Naive thymus-derived CD4-positive, alpha-beta T cell (primary cell): ENCODE measurements at regions of chr6 and their contacts with region 1.

Region 1: DNA sequence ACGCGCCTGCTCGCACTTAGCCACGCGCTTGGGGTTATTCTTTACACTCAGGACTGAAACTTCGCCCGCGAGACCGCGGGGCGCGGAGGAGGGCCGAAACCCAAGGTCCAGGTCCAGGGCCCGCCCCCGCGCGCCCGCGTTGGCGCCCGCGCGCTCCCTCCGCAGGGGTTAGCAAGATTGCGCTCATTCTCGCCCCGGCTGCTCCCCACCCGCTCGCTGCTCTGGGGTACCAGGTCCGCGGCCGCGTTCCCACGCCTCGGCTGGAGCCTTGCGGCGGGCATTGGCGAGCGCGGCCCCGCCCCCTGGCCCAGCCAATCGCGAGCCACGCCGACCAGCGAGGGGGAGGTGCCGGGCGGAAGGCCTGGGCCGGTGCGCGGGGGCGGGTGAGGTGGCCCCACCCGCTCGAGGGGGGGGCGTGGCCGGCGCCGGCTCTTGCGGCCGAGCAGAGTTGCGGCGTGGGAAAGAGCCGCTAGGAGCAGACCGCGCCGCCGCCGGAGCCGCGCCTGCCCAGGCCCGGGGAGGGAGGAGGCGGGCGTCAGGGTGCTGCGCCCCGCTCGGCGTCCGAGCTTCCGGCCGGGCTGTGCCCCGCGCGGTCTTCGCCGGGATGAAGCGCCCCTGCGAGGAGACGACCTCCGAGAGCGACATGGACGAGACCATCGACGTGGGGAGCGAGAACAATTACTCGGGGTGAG is at the start of gene HEY2:
- DNase-seq: peak; percentile 63 to 92 (median 69)
- ATAC-seq: peak; percentile 93
- H3K4me3 ChIP-seq: peak within 1 kb of the TSS; percentile 72
- H3K4me3 Mint-ChIP-seq: peak within 1 kb of the TSS; percentile 86 to 99 (median 93)
- H3K27ac ChIP-seq: peak within 1 kb of the TSS; percentile 45
- H3K27ac Mint-ChIP-seq: peak within 1 kb of the TSS in 8 of 9 donors; percentile 41 to 94 (median 68)
- H3K4me1 ChIP-seq: peaks cover 24 to 34% of the 10 kb centered on the region in 2 donors
- H3K4me1 Mint-ChIP-seq: peaks cover 26 to 50% (median 35%) of the 10 kb centered on the region in 7 donors
- H3K27me3 ChIP-seq: peaks cover 14 to 19% of the 10 kb centered on the region in 2 donors
- H3K27me3 Mint-ChIP-seq: peaks cover 19 to 82% (median 55%) of the 10 kb centered on the region in 5 donors
- total RNA-seq, gene HEY2: 0.34 to 0.46 (median 0.46) TPM in 3 of 5 experiments, not detected in the others

Region 2: DNA sequence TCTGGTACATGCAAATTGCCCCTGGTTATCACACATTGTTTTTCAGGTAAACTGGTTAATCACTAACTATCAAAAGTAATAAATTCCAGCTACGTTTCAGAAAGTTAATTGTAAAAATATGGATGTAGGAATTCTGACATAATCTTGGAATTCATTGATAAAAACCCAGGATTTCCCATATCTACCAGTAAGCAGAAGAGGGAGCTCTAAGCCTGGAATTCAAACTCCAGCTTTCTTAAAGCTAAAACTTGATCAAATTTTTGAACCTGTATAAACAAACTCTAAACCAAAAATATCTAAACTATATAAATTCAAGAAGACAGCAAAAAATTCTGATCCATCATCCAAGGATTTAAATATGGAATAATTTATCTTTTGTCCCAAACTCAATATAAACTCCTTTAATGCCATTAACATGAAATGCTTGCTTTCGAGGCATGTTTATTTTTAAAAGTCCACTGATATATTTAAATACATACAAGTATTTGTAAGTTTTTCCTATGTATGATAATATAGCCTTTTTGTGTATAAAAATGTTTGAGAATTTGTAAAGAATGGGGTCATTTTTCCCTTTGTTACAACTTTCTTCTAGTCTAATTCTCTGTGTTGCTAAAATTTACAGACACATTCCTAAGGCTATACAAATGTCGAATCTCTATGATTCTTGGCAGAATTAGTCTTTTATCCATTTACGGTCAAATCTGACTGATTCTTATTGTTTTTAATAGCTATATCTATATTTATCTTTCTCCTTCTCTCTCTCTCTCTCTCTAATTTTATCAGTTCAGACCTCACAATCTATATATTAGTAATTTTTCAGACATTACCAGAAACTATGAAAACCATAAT is 878.5 kb before region 1 on chr6:
- CTCF ChIA-PET with region 1: no interaction called
- POLR2A ChIA-PET with region 1: no interaction called
- intact Hi-C with region 1: loop called in 1 of 2 experiments (anchors 5 kb)
- DNase-seq: peak in 2 of 9 donors; percentile 9 to 26
- ATAC-seq: no peak
- H3K4me3 ChIP-seq: no peak overlapping the region
- H3K4me3 Mint-ChIP-seq: no peak overlapping the region
- H3K27ac ChIP-seq: no peak overlapping the region
- H3K27ac Mint-ChIP-seq: no peak overlapping the region
- H3K4me1 ChIP-seq: no peaks in the 10 kb centered on the region
- H3K4me1 Mint-ChIP-seq: no peaks in the 10 kb centered on the region
- H3K27me3 ChIP-seq: no peaks in the 10 kb centered on the region
- H3K27me3 Mint-ChIP-seq: peaks cover 0 to 12% (median 10%) of the 10 kb centered on the region in 5 donors

Region 3: GRCh38 chr6:125301435-125302391 is 447.6 kb before region 1 on chr6 and contains the start of gene HDDC2:
- CTCF ChIA-PET with region 1: interaction called, 4 read pairs
- POLR2A ChIA-PET with region 1: interaction called, 17 read pairs
- intact Hi-C with region 1: loop called (anchors 1 kb)
- DNase-seq: peak; percentile 23 to 66 (median 33)
- ATAC-seq: peak; percentile 66
- H3K4me3 ChIP-seq: peak within 1 kb of the TSS; percentile 61
- H3K4me3 Mint-ChIP-seq: peak within 1 kb of the TSS; percentile 83 to 95 (median 92)
- H3K27ac ChIP-seq: peak within 1 kb of the TSS; percentile 76
- H3K27ac Mint-ChIP-seq: peak within 1 kb of the TSS; percentile 64 to 95 (median 92)
- H3K4me1 ChIP-seq: peaks cover 25 to 34% of the 10 kb centered on the region in 2 donors
- H3K4me1 Mint-ChIP-seq: peaks cover 43 to 65% (median 63%) of the 10 kb centered on the region in 7 donors
- H3K27me3 ChIP-seq: no peaks in the 10 kb centered on the region
- H3K27me3 Mint-ChIP-seq: peaks cover 0 to 29% (median 0%) of the 10 kb centered on the region in 5 donors
- total RNA-seq, gene HDDC2: 33.4 to 58.5 (median 54.8) TPM

Region 4: DNA sequence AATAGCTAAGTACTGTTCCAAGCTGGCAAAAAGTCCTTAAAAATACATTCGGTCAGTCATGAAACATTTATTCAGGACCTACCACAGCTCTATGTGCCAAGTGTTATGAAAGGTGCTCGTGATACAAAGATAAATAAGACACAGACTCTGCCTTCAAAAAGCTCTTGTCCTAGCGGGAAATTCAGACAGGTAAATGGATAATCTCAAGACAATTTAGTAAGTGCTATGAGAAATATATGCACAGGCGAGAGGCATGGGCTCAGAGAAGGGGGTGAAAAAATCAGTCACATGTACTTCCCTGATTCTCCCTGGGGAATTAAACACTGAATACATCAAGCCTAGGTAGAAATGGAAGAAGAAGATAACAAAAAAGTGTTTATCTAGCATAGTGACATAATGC is 49.7 kb before region 1 on chr6:
- CTCF ChIA-PET with region 1: no interaction called
- POLR2A ChIA-PET with region 1: no interaction called
- intact Hi-C with region 1: loop called in 1 of 2 experiments (anchors 5 kb)
- DNase-seq: no peak
- ATAC-seq: no peak
- H3K4me3 ChIP-seq: no peak overlapping the region
- H3K4me3 Mint-ChIP-seq: no peak overlapping the region
- H3K27ac ChIP-seq: no peak overlapping the region
- H3K27ac Mint-ChIP-seq: no peak overlapping the region
- H3K4me1 ChIP-seq: no peaks in the 10 kb centered on the region
- H3K4me1 Mint-ChIP-seq: no peaks in the 10 kb centered on the region
- H3K27me3 ChIP-seq: no peaks in the 10 kb centered on the region
- H3K27me3 Mint-ChIP-seq: peaks cover 11 to 32% (median 15%) of the 10 kb centered on the region in 5 donors

Region 5: DNA sequence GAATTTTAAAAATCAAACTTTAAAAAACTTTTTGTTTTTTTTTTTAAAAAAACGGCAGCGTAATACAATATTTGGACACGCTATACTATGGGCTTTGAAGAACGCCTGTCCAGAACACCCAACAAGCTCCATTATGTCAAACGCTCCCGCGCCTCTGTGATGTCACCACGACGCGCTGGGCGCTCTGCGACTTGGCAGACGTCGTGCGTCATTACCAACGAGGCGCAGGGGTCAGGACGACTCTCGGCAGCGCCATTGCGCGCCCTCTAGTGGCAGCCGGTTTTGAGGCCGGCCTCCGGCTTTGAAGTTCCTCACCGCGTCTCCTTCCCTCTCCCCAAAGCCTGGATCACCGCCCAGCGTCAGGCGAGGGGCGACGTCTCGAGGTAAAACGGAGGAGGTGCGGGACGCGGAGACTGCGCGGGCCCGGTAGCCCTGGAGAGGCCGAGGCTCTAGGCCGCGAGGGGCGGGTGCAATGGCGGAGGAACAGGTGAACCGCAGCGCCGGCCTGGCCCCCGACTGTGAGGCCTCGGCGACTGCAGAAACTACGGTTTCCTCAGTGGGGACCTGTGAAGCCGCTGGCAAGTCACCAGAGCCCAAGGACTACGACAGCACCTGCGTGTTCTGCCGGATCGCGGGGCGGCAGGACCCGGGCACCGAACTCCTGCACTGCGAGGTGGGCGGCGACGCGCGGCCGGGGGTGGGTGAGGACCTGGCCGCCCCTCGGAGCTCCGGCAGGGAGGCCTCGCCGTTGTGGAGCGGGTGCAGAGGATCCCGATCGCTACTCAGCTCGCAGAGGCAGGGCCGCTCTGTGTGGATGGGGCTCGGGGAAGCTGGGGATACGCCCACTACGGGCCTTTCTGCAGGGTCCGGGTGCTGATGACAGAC is 207.4 kb after region 1 on chr6 and contains the start of gene HINT3:
- CTCF ChIA-PET with region 1: no interaction called
- POLR2A ChIA-PET with region 1: interaction called, 3 read pairs
- intact Hi-C with region 1: loop called (anchors 1 kb)
- DNase-seq: peak; percentile 94 to 98 (median 97)
- ATAC-seq: peak; percentile 96
- H3K4me3 ChIP-seq: peak within 1 kb of the TSS; percentile 78
- H3K4me3 Mint-ChIP-seq: peak within 1 kb of the TSS in 1 of 10 donors; percentile 69
- H3K27ac ChIP-seq: peak within 1 kb of the TSS; percentile 98
- H3K27ac Mint-ChIP-seq: peak within 1 kb of the TSS in 3 of 9 donors; percentile 62 to 76 (median 73)
- H3K4me1 ChIP-seq: peaks cover 16 to 18% of the 10 kb centered on the region in 2 donors
- H3K4me1 Mint-ChIP-seq: peaks cover 0 to 22% (median 7%) of the 10 kb centered on the region in 7 donors
- H3K27me3 ChIP-seq: no peaks in the 10 kb centered on the region
- H3K27me3 Mint-ChIP-seq: peaks cover 0 to 7% (median 5%) of the 10 kb centered on the region in 5 donors
- total RNA-seq, gene HINT3: 7.7 to 12.4 (median 9.5) TPM

Region 6: GRCh38 chr6:127266178-127266891 is 1517.0 kb after region 1 on chr6 and contains the start of gene RNF146:
- CTCF ChIA-PET with region 1: interaction called, 3 read pairs
- POLR2A ChIA-PET with region 1: no interaction called
- intact Hi-C with region 1: loop called in 1 of 2 experiments (anchors 10 kb)
- DNase-seq: peak; percentile 55 to 81 (median 75)
- ATAC-seq: peak; percentile 86
- H3K4me3 ChIP-seq: peak within 1 kb of the TSS; percentile 96
- H3K4me3 Mint-ChIP-seq: peak within 1 kb of the TSS; percentile 92 to 100 (median 96)
- H3K27ac ChIP-seq: peak within 1 kb of the TSS; percentile 95
- H3K27ac Mint-ChIP-seq: peak within 1 kb of the TSS; percentile 91 to 100 (median 98)
- H3K4me1 ChIP-seq: peaks cover 12 to 15% of the 10 kb centered on the region in 2 donors
- H3K4me1 Mint-ChIP-seq: peaks cover 28 to 53% (median 41%) of the 10 kb centered on the region in 7 donors
- H3K27me3 ChIP-seq: no peaks in the 10 kb centered on the region
- H3K27me3 Mint-ChIP-seq: peaks cover 0 to 19% (median 0%) of the 10 kb centered on the region in 5 donors
- total RNA-seq, gene RNF146: 17.6 to 38.1 (median 20.8) TPM